ENCODE measurements at regions of chr15 and their contacts with region 1.

Region 1: DNA sequence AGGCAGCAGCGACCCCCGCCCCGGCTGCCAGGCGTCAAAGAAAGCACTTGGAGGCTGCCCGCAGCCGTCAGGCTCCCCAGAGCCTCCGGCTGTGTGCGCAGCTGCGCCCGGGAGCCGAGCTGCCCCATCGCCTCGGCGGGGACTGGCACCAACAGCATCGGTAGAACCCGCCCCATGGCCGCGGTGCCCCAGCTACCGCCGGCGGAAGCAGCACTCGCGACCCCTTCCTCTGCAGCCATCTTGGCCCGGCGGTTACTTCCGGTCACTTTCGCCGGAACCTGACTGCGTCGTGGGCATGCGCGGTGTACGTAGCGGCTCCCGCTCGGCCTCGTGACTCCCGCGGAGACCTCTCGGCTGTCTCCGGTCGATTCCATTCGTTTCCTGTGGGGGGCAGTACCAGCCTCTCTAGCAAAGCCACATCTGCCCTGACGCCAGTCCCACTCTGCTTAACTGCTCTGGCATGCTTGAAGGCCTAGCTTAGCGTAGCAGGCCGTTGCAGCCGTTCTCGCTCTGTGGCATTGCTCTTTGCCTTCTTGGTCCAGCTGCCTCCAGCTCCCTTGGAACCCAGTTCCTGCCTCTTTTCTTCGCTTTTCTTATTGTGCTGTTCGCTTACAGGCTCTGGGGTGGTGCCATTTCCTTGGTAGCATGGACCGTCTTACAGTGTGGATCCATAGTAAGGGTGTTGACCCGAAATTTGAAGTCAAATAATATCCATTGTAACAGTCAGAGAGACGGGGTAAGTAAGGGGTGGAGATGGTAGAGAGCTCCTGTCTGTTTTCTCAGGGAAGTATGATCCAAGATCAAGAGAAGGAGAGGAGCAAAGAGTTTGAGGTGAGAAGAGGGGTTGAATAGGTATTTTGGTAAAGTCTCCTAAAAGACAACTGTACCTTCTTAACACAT is at the start of gene SPG11:
- DNase-seq: peak; percentile 93 to 97 (median 94)
- H3K4me3 ChIP-seq: peak within 1 kb of the TSS; percentile 49 to 81
- H3K4me3 Mint-ChIP-seq: peak within 1 kb of the TSS; percentile 94 to 99 (median 98)
- H3K27ac ChIP-seq: peak within 1 kb of the TSS; percentile 96
- H3K27ac Mint-ChIP-seq: peak within 1 kb of the TSS; percentile 93 to 100 (median 97)
- H3K4me1 ChIP-seq: peaks cover 69% of the 10 kb centered on the region
- H3K4me1 Mint-ChIP-seq: peaks cover 47 to 75% (median 58%) of the 10 kb centered on the region in 4 donors
- H3K27me3 ChIP-seq: no peaks in the 10 kb centered on the region
- H3K27me3 Mint-ChIP-seq: no peaks in the 10 kb centered on the region
- total RNA-seq, gene SPG11: 112 to 121 TPM

Region 2: DNA sequence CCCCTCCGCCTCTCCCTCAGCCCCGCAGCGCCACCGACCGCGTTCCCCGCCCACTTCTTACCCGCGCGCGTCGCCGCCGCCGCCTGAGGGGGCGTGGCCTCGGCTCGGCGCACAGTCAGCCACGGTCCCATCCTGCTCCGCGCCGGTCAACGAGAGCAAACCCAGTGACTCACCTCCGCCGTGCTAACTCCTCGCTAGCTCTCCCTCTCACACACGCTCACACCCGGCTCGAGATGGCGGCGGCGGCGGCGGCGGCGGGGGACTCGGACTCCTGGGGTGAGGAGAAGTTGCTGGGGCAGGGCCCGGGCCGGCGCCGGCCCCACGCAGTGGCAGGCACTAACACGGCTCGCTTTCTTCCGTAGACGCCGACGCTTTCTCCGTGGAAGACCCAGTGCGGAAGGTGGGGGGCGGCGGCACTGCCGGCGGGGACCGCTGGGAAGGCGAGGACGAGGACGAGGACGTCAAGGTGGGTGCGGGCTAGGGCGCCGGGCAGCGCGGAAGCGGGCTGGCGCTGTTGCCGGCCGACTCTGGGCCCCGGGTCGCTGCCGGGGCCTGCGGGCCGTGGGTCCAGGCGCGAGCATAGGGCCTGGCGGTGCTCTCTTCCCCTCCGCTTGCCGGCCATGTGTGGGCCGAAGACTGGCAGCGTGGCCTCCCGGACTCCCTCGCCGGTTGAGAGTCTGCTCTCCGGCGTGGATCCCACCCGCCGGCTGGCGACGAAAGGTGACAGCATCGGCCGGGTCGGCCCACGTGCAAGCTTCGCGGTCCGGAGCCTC is 126.5 kb before region 1 on chr15 and contains the start of gene EIF3J:
- CTCF ChIA-PET with region 1: no interaction called
- POLR2A ChIA-PET with region 1: interaction called, 6 read pairs
- intact Hi-C with region 1: loop called (anchors 5 kb)
- DNase-seq: peak; percentile 94 to 96 (median 96)
- H3K4me3 ChIP-seq: peak within 1 kb of the TSS; percentile 71 to 90
- H3K4me3 Mint-ChIP-seq: peak within 1 kb of the TSS; percentile 83 to 96 (median 92)
- H3K27ac ChIP-seq: peak within 1 kb of the TSS; percentile 91
- H3K27ac Mint-ChIP-seq: peak within 1 kb of the TSS; percentile 88 to 97 (median 96)
- H3K4me1 ChIP-seq: peaks cover 48% of the 10 kb centered on the region
- H3K4me1 Mint-ChIP-seq: peaks cover 36 to 68% (median 48%) of the 10 kb centered on the region in 4 donors
- H3K27me3 ChIP-seq: no peaks in the 10 kb centered on the region
- H3K27me3 Mint-ChIP-seq: no peaks in the 10 kb centered on the region
- total RNA-seq, gene EIF3J: 65.0 to 76.8 TPM

Region 3: DNA sequence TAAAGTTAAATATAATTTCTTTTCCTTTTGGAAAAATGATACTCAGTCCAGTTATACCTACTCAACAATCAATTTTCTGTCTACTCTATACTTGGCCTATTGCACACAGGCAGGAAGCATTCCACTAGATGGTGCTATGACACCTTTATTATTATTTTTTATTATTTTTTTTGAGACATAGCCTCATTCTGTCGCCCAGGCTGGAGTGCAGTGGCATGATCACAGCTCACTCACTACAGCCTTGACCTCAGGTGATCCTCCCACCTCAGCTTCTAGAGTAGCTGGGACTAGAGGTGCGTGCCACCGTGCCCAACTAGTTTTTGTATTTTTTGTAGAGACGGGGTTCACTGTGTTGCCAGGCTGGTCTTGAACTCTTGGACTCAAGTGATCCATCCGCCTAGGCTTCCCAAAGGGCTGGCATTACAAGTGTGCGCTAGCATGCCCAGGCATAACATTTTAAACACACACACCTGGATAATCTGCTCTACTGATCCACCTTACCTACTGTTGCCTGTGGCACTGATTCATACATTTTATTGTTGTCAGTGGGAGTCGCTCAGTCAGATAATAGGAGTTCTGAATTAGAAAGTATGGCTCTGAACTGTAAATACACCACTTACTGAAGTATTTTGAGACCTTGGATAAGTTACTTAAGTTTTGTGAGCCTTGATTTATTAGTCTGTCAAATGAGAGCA is 70.5 kb before region 1 on chr15:
- CTCF ChIA-PET with region 1: interaction called, 17 read pairs
- POLR2A ChIA-PET with region 1: interaction called, 15 read pairs
- intact Hi-C with region 1: loop called (anchors 2 kb)
- DNase-seq: peak in 4 of 5 donors; percentile 58 to 61 (median 60)
- H3K4me3 ChIP-seq: no peak overlapping the region
- H3K4me3 Mint-ChIP-seq: no peak overlapping the region
- H3K27ac ChIP-seq: no peak overlapping the region
- H3K27ac Mint-ChIP-seq: peak overlapping the region in 5 of 7 donors; percentile 62 to 83 (median 78)
- H3K4me1 ChIP-seq: peaks cover 19% of the 10 kb centered on the region
- H3K4me1 Mint-ChIP-seq: peaks cover 8 to 31% (median 17%) of the 10 kb centered on the region in 4 donors
- H3K27me3 ChIP-seq: no peaks in the 10 kb centered on the region
- H3K27me3 Mint-ChIP-seq: no peaks in the 10 kb centered on the region

Region 4: DNA sequence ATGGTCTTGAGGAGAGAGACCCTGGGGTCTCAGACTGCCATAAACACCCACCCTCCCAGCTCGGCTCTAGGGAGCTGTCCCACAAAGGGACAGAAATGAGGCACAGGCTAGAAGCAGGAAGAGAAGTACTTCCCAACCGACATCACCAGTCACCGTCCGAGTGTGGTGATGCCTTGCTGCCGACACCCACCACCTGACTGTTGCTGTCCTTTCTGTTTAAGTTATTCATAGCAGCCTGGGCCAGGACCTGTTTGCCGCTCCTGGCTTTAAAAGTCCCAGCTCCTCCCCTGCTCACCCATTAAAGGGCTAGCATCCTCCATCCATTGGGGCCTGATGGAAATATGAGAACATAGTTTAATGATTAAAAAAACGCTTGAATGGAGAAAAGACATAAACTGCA is 13.0 kb after region 1 on chr15:
- CTCF ChIA-PET with region 1: interaction called, 107 read pairs
- POLR2A ChIA-PET with region 1: interaction called, 1,003 read pairs
- intact Hi-C with region 1: loop called (anchors 1 kb)
- DNase-seq: peak in 1 of 5 donors; percentile 22
- H3K4me3 ChIP-seq: peak overlapping the region; percentile 10 to 23
- H3K4me3 Mint-ChIP-seq: peak overlapping the region; percentile 45 to 88 (median 82)
- H3K27ac ChIP-seq: peak overlapping the region; percentile 39
- H3K27ac Mint-ChIP-seq: peak overlapping the region; percentile 87 to 97 (median 95)
- H3K4me1 ChIP-seq: peaks cover 100% of the 10 kb centered on the region
- H3K4me1 Mint-ChIP-seq: peaks cover 67 to 95% (median 86%) of the 10 kb centered on the region in 4 donors
- H3K27me3 ChIP-seq: no peaks in the 10 kb centered on the region
- H3K27me3 Mint-ChIP-seq: no peaks in the 10 kb centered on the region

Region 5: DNA sequence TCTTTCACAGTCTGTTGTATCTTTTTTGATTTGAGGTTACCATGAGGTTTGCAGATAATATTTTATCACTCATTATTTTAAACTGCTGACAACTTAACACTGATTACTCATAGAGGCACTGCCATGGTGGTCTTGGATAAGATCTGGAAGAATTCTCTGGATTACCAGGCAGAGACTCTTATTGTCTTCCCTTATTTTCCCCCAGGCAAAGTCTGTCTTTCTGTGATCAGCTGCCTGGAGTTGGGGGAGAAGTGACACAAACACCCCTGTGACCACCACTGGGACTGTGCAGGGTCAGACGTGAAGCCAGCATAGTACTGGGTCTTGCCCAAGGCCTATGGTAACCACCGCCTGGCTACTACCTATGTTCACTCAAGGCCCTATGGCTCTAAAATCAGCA is 42.7 kb after region 1 on chr15:
- CTCF ChIA-PET with region 1: interaction called, 821 read pairs
- POLR2A ChIA-PET with region 1: interaction called, 5,737 read pairs
- intact Hi-C with region 1: loop called (anchors 1 kb)
- DNase-seq: no peak
- H3K4me3 ChIP-seq: no peak overlapping the region
- H3K4me3 Mint-ChIP-seq: no peak overlapping the region
- H3K27ac ChIP-seq: no peak overlapping the region
- H3K27ac Mint-ChIP-seq: no peak overlapping the region
- H3K4me1 ChIP-seq: peaks cover 20% of the 10 kb centered on the region
- H3K4me1 Mint-ChIP-seq: peaks cover 19 to 47% (median 32%) of the 10 kb centered on the region in 4 donors
- H3K27me3 ChIP-seq: no peaks in the 10 kb centered on the region
- H3K27me3 Mint-ChIP-seq: no peaks in the 10 kb centered on the region

Region 6: DNA sequence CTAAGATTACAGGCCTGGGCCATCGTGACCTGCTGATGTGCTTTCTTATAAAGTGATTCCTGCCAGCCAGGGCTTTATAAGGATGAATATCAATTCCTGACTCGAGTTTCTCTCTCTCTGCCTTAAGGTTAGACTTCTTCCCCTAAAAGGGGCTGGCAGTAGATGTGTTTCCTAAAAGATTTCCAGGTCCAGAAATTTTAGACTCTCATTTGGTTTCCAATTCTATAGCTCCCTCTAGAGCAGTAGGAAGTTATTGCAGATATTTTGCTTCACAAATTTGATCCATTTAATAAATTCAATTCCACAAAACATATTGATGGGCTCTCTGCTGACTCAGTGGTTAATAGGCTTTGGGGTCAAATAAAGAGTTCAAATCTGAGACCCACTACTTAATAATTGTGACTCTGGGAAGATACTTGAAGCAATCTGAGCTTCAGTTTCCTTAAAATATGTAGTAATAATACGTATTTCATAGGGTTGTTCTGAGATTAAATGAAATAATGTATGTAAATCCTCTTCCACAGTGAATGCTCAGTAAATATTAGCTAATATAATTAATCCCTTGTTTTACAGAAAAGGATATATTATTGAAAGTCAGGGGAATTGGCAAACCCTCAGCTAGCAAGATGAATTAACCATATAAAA is 74.8 kb after region 1 on chr15:
- CTCF ChIA-PET with region 1: interaction called, 821 read pairs
- POLR2A ChIA-PET with region 1: interaction called, 5,737 read pairs
- intact Hi-C with region 1: loop called (anchors 1 kb)
- DNase-seq: peak in 4 of 5 donors; percentile 59 to 65 (median 64)
- H3K4me3 ChIP-seq: no peak overlapping the region
- H3K4me3 Mint-ChIP-seq: peak overlapping the region in 5 of 8 donors; percentile 32 to 68 (median 43)
- H3K27ac ChIP-seq: peak overlapping the region; percentile 19
- H3K27ac Mint-ChIP-seq: peak overlapping the region; percentile 77 to 93 (median 87)
- H3K4me1 ChIP-seq: peaks cover 54% of the 10 kb centered on the region
- H3K4me1 Mint-ChIP-seq: peaks cover 35 to 55% (median 48%) of the 10 kb centered on the region in 4 donors
- H3K27me3 ChIP-seq: no peaks in the 10 kb centered on the region
- H3K27me3 Mint-ChIP-seq: no peaks in the 10 kb centered on the region

Measured in CD4-positive, alpha-beta memory T cell (primary cell).